ENCODE measurements at regions of chr9 and their contacts with region 1.

Region 1: GRCh38 chr9:37371565-37372464 is 50.7 kb upstream of the GRHPR start:
- DNase-seq: peak; percentile 74
- ATAC-seq: peak; percentile 4
- H3K4me3 ChIP-seq: peak overlapping the region in 2 of 5 experiments; percentile 25 to 38
- H3K4me3 Mint-ChIP-seq: peak overlapping the region; percentile 70
- H3K27ac ChIP-seq: peak overlapping the region; percentile 78 to 94
- H3K27ac Mint-ChIP-seq: peak overlapping the region; percentile 88
- H3K4me1 ChIP-seq: peaks cover 95 to 100% of the 10 kb centered on the region in 2 donors
- H3K4me1 Mint-ChIP-seq: peaks cover 88% of the 10 kb centered on the region
- H3K27me3 ChIP-seq: no peaks in the 10 kb centered on the region
- H3K27me3 Mint-ChIP-seq: no peaks in the 10 kb centered on the region
- CTCF ChIP-seq: no peak

Region 2: GRCh38 chr9:37311938-37312708 is 59.7 kb before region 1 on chr9:
- CTCF ChIA-PET with region 1: no interaction called
- POLR2A ChIA-PET with region 1: no interaction called
- intact Hi-C with region 1: no loop called
- DNase-seq: no peak
- ATAC-seq: no peak
- H3K4me3 ChIP-seq: no peak overlapping the region
- H3K4me3 Mint-ChIP-seq: no peak overlapping the region
- H3K27ac ChIP-seq: no peak overlapping the region
- H3K27ac Mint-ChIP-seq: no peak overlapping the region
- H3K4me1 ChIP-seq: peaks cover 11 to 24% of the 10 kb centered on the region in 2 donors
- H3K4me1 Mint-ChIP-seq: peaks cover 20% of the 10 kb centered on the region
- H3K27me3 ChIP-seq: no peaks in the 10 kb centered on the region
- H3K27me3 Mint-ChIP-seq: no peaks in the 10 kb centered on the region
- CTCF ChIP-seq: no peak

Region 3: GRCh38 chr9:37337301-37337890 is 34.4 kb before region 1 on chr9:
- CTCF ChIA-PET with region 1: interaction called, 4 read pairs
- POLR2A ChIA-PET with region 1: interaction called, 12 read pairs
- intact Hi-C with region 1: loop called (anchors 1 kb)
- DNase-seq: peak; percentile 49
- ATAC-seq: peak; percentile 50
- H3K4me3 ChIP-seq: peak overlapping the region in 3 of 5 experiments; percentile 10 to 42 (median 10)
- H3K4me3 Mint-ChIP-seq: peak overlapping the region; percentile 82
- H3K27ac ChIP-seq: peak overlapping the region; percentile 34 to 77
- H3K27ac Mint-ChIP-seq: peak overlapping the region; percentile 88
- H3K4me1 ChIP-seq: peaks cover 57 to 86% of the 10 kb centered on the region in 2 donors
- H3K4me1 Mint-ChIP-seq: peaks cover 53% of the 10 kb centered on the region
- H3K27me3 ChIP-seq: no peaks in the 10 kb centered on the region
- H3K27me3 Mint-ChIP-seq: no peaks in the 10 kb centered on the region
- CTCF ChIP-seq: no peak

Region 4: DNA sequence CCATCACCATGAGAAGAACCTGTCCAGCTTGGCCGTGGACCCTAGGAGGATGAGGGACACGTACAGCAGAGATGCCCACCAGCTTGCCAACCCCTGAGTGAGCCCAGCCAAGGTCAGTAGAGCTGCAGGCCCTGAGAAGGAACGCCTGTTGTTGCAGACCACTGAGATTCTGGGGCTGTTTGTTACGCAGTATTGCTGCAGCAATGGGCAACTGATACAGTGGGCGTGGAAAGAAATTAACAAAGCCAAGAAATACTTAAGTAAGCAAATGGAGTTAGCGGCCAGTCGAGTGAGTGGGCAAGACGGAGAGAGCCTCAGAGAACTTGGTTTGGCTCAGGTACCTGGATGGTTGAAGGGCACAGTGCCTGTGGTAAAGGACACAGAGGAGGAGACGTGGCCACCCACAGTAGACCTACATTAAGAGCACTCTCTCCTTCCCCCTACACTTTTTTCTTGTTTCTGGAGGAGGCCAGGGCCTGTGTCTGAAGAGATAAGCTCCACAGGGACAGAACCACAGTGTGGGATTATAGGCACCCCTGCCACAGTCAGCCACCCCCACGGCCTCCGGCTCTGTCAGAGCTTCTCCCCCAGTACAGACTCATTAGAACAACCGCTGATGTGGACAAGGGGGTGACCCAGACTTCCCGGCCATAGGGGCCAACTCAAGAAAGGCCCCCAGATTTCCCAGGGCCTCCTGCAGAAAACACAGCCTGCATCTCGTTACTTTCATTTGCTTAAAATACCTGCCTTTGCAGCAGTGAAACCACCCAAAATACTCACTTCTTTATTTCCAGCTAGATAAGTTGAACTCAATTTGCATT is 10.6 kb after region 1 on chr9:
- CTCF ChIA-PET with region 1: interaction called, 139 read pairs
- POLR2A ChIA-PET with region 1: interaction called, 12 read pairs
- intact Hi-C with region 1: no loop called
- DNase-seq: peak; percentile 73
- ATAC-seq: peak; percentile 22
- H3K4me3 ChIP-seq: peak overlapping the region in 1 of 5 experiments; percentile 27
- H3K4me3 Mint-ChIP-seq: peak overlapping the region; percentile 68
- H3K27ac ChIP-seq: peak overlapping the region; percentile 75 to 90
- H3K27ac Mint-ChIP-seq: peak overlapping the region; percentile 94
- H3K4me1 ChIP-seq: peaks cover 79 to 95% of the 10 kb centered on the region in 2 donors
- H3K4me1 Mint-ChIP-seq: peaks cover 84% of the 10 kb centered on the region
- H3K27me3 ChIP-seq: no peaks in the 10 kb centered on the region
- H3K27me3 Mint-ChIP-seq: no peaks in the 10 kb centered on the region
- CTCF ChIP-seq: no peak

Region 5: GRCh38 chr9:37390759-37391158 is 18.9 kb after region 1 on chr9:
- CTCF ChIA-PET with region 1: interaction called, 139 read pairs
- POLR2A ChIA-PET with region 1: interaction called, 12 read pairs
- intact Hi-C with region 1: loop called (anchors 1 kb)
- DNase-seq: peak; percentile 79
- ATAC-seq: peak; percentile 66
- H3K4me3 ChIP-seq: no peak overlapping the region
- H3K4me3 Mint-ChIP-seq: peak overlapping the region; percentile 56
- H3K27ac ChIP-seq: peak overlapping the region in 1 of 2 donors; percentile 52
- H3K27ac Mint-ChIP-seq: peak overlapping the region; percentile 60
- H3K4me1 ChIP-seq: peaks cover 30 to 48% of the 10 kb centered on the region in 2 donors
- H3K4me1 Mint-ChIP-seq: peaks cover 55% of the 10 kb centered on the region
- H3K27me3 ChIP-seq: no peaks in the 10 kb centered on the region
- H3K27me3 Mint-ChIP-seq: no peaks in the 10 kb centered on the region
- CTCF ChIP-seq: peak; percentile 58

Region 6: DNA sequence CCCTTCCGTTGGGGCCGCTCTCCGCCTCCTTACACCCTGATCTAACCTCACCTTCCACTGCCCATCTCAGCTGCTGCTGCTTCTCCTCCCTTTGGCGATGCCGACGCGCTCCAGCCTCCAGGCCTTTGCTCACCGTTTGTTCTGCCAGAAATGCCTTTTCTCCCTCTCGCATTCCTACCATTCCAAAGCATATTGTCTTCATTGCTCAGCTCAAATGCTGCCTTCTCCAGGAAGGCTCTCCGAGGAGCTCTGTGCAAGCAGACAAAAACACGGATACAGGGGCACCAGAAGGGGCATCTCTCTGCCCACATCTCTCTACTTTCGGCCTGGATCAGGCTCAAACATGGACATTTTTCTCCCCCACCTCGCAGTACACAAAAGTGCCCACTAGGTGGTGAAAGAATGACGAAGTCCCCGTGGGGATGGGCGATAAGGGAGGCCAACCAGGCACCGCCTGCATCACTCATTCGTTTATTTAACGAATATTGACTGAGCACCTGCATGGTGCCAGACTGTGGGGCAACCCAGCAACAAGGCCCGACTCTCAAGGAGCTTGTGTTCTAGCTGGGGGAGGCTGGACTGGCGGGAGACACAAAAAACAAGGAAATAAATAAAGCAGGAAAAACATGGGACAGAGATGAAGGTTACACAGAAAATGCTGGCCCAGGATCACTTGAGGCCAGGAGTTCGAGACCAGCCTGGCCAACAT is 43.4 kb after region 1 on chr9:
- CTCF ChIA-PET with region 1: interaction called, 125 read pairs
- POLR2A ChIA-PET with region 1: interaction called, 7 read pairs
- intact Hi-C with region 1: no loop called
- DNase-seq: peak; percentile 86
- ATAC-seq: peak; percentile 84
- H3K4me3 ChIP-seq: no peak overlapping the region
- H3K4me3 Mint-ChIP-seq: peak overlapping the region; percentile 67
- H3K27ac ChIP-seq: no peak overlapping the region
- H3K27ac Mint-ChIP-seq: peak overlapping the region; percentile 79
- H3K4me1 ChIP-seq: peaks cover 32 to 45% of the 10 kb centered on the region in 2 donors
- H3K4me1 Mint-ChIP-seq: peaks cover 42% of the 10 kb centered on the region
- H3K27me3 ChIP-seq: no peaks in the 10 kb centered on the region
- H3K27me3 Mint-ChIP-seq: no peaks in the 10 kb centered on the region
- CTCF ChIP-seq: peak; percentile 83